ENCODE measurements at regions of chr6 and their contacts with region 1.

Region 1: GRCh38 chr6:52503848-52504781 is 72.7 kb downstream of the TRAM2 start:
- DNase-seq: peak; percentile 94
- ATAC-seq: peak; percentile 88
- H3K4me3 ChIP-seq: peak overlapping the region; percentile 13 to 35; a peak in 3 of 4 replicates
- H3K27ac ChIP-seq: peak overlapping the region; percentile 76
- H3K4me1 ChIP-seq: peaks cover 27 to 42% of the 10 kb centered on the region in 2 experiments
- H3K27me3 ChIP-seq: no peaks in the 10 kb centered on the region
- CTCF ChIP-seq: no peak
- POLR2A ChIP-seq: no peak
- RAD21 ChIP-seq: peak; percentile 37

Region 2: DNA sequence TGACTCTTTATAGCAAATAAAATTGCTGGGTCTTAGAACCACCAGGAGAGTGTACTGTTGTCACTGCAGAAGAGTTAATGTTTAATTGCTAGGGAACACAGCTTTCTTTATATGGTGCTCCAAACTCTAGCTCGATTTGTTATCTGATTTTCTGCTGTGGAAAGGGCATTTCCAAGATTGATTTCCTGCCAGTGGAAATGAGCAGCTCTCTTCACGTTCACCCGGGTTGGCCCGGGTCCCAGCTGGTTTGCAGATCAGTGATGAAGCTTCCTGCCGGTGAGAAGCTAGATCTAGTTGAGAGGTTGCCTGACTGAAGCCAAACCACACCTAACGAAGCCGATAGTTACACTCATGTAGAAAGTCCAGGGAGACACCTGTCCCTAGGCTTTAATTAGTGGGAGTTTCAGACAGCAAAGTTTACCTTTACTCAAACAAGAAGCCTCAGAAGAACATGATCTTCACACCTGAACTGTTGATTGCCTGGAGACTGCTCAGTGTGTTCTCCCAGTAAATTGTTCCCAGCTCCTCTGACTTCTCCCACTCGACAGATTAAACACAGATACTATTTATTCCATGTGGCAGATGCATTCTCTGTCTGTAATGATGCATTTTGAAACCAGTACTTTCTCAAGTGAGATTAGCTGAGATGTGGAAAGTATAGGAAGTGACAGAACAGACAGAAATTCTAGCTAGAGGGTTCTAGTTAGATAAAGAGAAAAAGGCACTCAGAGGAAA is 114.3 kb before region 1 on chr6:
- CTCF ChIA-PET with region 1: no interaction called
- POLR2A ChIA-PET with region 1: no interaction called
- RAD21 ChIA-PET with region 1: no interaction called
- intact Hi-C with region 1: no loop called
- DNase-seq: peak; percentile 48
- ATAC-seq: peak; percentile 71
- H3K4me3 ChIP-seq: peak overlapping the region in 1 of 2 experiments; percentile 46; a peak in 2 of 4 replicates
- H3K27ac ChIP-seq: peak overlapping the region; percentile 54
- H3K4me1 ChIP-seq: peaks cover 25 to 36% of the 10 kb centered on the region in 2 experiments
- H3K27me3 ChIP-seq: no peaks in the 10 kb centered on the region
- CTCF ChIP-seq: no peak
- POLR2A ChIP-seq: no peak
- RAD21 ChIP-seq: peak; percentile 17; the same call in 1 of the 2 replicates

Region 3: GRCh38 chr6:52517502-52518278 is 13.6 kb after region 1 on chr6:
- CTCF ChIA-PET with region 1: interaction called, 5 read pairs
- POLR2A ChIA-PET with region 1: interaction called, 5 read pairs
- RAD21 ChIA-PET with region 1: interaction called in 1 of 2 experiments, 4 read pairs
- intact Hi-C with region 1: loop called (anchors 1 kb)
- DNase-seq: peak; percentile 80
- ATAC-seq: peak; percentile 89
- H3K4me3 ChIP-seq: peak overlapping the region in 1 of 2 experiments; percentile 36; a peak in 3 of 4 replicates
- H3K27ac ChIP-seq: peak overlapping the region; percentile 73
- H3K4me1 ChIP-seq: peaks cover 55 to 73% of the 10 kb centered on the region in 2 experiments
- H3K27me3 ChIP-seq: no peaks in the 10 kb centered on the region
- CTCF ChIP-seq: no peak
- POLR2A ChIP-seq: no peak
- RAD21 ChIP-seq: peak; percentile 31; the same call in 1 of the 2 replicates

Region 4: DNA sequence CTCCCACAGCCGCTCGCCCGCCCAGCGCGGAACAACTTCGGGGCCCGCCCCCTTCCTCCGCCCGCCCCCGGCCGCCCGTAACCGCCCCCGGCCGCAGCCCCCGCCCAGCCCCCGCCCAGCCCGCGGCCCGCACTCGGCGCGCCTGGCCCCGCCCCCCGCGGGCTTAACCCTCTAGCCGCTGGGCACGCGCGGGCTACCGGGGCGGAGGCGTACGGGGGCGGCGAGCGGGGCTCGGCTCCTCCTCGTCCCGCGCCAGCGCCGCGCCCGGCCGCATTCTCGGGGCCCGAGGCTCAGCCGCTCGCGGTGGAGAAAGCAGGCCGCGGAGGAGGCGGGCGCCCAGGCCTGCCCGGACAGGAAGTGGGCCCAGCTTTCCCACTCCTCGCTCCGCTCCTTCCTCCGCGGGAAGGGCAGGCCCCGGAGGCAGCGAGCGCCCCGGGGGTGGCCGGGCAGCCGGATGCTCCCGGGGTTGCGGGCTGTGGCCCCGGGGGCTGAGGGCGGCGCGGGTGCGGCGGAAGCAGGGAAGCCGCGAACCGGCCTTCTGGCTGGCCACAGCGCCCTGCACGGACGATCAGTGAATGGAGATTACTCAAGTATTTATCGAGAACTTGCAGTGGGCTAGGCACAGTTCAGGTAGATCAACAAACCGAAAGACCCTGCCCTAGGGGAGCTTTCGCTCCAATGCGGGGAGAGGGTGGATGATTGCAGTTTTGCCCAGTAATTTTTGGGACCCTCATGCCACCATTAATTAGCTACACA is 73.1 kb after region 1 on chr6 and contains the start of gene TRAM2:
- CTCF ChIA-PET with region 1: no interaction called
- POLR2A ChIA-PET with region 1: interaction called, 5 read pairs
- RAD21 ChIA-PET with region 1: no interaction called
- intact Hi-C with region 1: loop called (anchors 2 kb)
- DNase-seq: peak; percentile 27
- ATAC-seq: peak; percentile 84
- H3K4me3 ChIP-seq: peak within 1 kb of the TSS; percentile 74 to 89
- H3K27ac ChIP-seq: peak within 1 kb of the TSS; percentile 74
- H3K4me1 ChIP-seq: peaks cover 11 to 34% of the 10 kb centered on the region in 2 experiments; a peak in 3 of 4 replicates
- H3K27me3 ChIP-seq: no peaks in the 10 kb centered on the region
- CTCF ChIP-seq: 0 out of 6 replicates have a peak, but pooled peaks of 1 of the 3 experiments have one; percentile 6
- POLR2A ChIP-seq: peak; percentile 57
- RAD21 ChIP-seq: no peak
- total RNA-seq, gene TRAM2: 21.3 TPM

Region 5: DNA sequence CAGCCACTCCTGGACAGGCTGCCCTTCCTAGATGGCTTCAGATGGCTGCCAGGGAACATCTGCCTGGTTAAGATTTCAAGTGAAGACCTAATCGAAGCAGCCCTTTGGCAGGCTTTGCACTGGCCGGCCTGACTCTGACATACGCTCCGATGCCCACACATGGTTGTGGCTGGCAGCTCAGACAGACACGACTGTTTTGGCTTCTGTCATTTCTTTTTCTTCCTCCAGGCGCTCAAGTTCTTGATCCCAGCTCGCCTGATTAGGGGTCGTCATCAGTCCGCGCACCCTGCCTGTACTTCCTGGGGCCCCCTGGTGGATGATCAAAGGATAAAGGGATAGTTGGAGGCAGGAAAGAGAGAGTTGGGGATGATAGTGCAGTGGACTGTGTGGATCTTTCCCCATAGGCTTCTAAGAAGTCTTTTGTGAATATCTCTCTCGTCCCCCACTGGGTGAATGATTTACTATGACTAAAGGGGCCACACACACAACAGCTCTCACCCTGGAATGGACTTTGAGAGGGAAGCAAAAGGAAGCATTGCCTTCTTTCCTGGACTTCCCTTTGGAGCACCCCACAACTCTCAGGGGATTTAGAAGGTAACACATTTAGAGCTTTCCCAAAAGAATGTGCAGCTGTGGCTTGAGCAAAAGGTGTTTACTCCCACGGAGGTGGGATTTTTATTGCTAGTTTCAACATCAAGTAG is 94.2 kb after region 1 on chr6:
- CTCF ChIA-PET with region 1: no interaction called
- POLR2A ChIA-PET with region 1: interaction called, 3 read pairs
- RAD21 ChIA-PET with region 1: no interaction called
- intact Hi-C with region 1: loop called (anchors 2 kb)
- DNase-seq: peak; percentile 69
- ATAC-seq: peak; percentile 95
- H3K4me3 ChIP-seq: no peak overlapping the region
- H3K27ac ChIP-seq: no peak overlapping the region
- H3K4me1 ChIP-seq: peaks cover 0 to 27% of the 10 kb centered on the region in 2 experiments; a peak in 2 of 4 replicates
- H3K27me3 ChIP-seq: no peaks in the 10 kb centered on the region
- CTCF ChIP-seq: peak; percentile 72 to 85 (median 84)
- POLR2A ChIP-seq: no peak
- RAD21 ChIP-seq: peak; percentile 68

Measured in HCT116 (cell line).